MCF 10A (cell line): ENCODE measurements at regions of chr21 and their contacts with region 1.

Region 1: DNA sequence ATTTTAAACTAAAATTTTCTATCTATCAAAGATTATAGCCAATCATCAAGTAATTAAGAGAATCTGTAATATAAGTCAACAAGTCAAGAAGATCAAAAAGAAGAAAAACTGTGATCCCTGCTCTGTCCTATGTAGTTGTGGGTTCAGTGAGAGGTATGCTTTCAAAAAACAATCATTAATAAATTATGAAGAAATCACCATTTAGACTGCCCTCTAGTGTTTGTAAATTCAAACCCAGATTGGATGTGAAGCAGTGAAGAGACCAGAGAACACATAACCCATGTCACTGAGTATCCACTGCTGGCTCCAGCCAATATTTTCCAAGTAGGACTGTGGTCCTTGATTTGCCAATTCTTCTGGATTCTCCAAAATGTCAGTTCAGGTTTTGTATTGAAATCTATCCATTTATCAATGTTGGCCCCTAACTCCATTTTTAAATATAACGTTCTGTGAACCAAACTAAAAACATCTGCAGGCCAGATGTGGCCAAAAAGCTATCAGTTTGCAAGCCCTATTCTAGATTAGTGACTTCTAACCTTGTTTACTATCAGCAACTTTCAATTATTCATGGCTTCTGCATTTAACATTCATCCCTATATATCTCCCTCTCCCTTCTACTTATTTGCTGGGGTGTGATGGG is 467.5 kb upstream of the CXADR start:
- DNase-seq: peak; percentile 45
- H3K4me3 Mint-ChIP-seq: no peak overlapping the region
- H3K27ac Mint-ChIP-seq: no peak overlapping the region
- H3K4me1 Mint-ChIP-seq: no peaks in the 10 kb centered on the region
- H3K27me3 Mint-ChIP-seq: no peaks in the 10 kb centered on the region
- CTCF ChIP-seq: peak; percentile 52

Region 2: DNA sequence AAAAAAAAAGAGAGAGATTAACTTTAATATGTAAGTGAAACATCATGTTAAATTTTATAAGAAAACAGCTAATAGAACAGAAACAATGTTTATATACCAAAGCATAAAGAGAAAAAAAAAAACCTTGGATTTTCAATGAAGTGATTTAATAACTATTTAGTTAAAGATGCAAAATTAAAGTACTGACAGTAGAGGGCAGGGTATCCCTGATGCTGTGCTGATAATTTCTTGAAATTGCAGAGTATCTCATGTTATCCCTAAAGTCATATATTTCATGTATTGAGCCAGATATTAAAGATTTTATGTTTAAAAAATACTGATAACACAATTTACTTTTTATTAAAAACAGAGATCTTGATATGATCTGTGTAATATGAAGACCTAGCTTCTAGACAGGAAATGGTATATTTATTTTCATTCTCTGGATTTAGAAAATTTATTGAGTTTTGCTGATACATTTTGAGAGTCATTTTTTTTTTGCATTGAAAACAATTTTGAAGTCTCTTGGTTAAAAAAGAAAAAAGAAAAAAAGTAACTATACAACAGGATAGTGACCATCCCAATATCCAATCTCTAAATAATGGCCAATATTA is 1042.4 kb before region 1 on chr21:
- CTCF ChIA-PET with region 1: no interaction called
- POLR2A ChIA-PET with region 1: no interaction called
- intact Hi-C with region 1: loop called (anchors 1 kb)
- DNase-seq: peak; percentile 18
- H3K4me3 Mint-ChIP-seq: no peak overlapping the region
- H3K27ac Mint-ChIP-seq: no peak overlapping the region
- H3K4me1 Mint-ChIP-seq: no peaks in the 10 kb centered on the region
- H3K27me3 Mint-ChIP-seq: no peaks in the 10 kb centered on the region
- CTCF ChIP-seq: peak; percentile 31

Region 3: GRCh38 chr21:16071092-16071491 is 974.2 kb before region 1 on chr21:
- CTCF ChIA-PET with region 1: no interaction called
- POLR2A ChIA-PET with region 1: no interaction called
- intact Hi-C with region 1: loop called (anchors 10 kb)
- DNase-seq: no peak
- H3K4me3 Mint-ChIP-seq: no peak overlapping the region
- H3K27ac Mint-ChIP-seq: no peak overlapping the region
- H3K4me1 Mint-ChIP-seq: no peaks in the 10 kb centered on the region
- H3K27me3 Mint-ChIP-seq: peaks cover 28% of the 10 kb centered on the region
- CTCF ChIP-seq: no peak

Region 4: DNA sequence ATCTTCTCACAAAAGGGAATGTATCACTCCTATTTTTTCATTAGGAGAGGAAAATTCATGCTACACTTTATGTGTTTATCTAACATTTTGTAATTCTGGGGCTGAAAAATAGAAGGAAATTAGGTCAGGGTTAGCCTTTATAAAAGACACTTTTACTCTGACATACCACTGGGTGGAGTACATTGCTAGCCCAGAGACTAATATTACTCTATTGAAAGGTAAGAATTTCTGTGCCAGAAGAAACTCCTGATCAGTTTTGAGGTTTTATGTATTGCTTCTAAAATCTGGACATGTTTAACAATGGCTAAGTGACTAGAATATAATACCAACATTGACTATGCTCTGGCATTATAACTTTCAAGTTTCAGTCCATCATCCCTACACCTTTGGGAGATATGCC is 590.9 kb before region 1 on chr21:
- CTCF ChIA-PET with region 1: no interaction called
- POLR2A ChIA-PET with region 1: no interaction called
- intact Hi-C with region 1: loop called (anchors 1 kb)
- DNase-seq: peak; percentile 9
- H3K4me3 Mint-ChIP-seq: no peak overlapping the region
- H3K27ac Mint-ChIP-seq: no peak overlapping the region
- H3K4me1 Mint-ChIP-seq: no peaks in the 10 kb centered on the region
- H3K27me3 Mint-ChIP-seq: no peaks in the 10 kb centered on the region
- CTCF ChIP-seq: peak; percentile 26

Region 5: DNA sequence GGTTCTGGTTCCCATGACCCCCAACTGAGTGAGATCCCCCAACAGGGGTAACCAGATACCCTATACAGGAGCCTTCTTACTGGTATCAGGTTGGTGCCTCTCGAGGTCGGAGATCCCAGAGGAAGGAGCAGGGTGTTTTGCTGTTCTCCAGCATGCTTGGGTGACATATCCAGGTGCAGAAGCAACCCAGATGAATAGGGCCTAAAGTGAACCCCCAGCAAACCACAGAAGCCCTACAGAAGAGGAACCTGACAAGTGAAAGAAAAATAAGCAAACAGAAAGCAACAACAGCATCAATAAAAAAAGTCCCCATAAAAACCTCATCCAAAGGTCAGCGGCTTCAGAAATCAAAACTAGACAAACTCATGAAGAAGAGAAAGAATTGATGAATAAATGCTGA is 165.9 kb before region 1 on chr21:
- CTCF ChIA-PET with region 1: no interaction called
- POLR2A ChIA-PET with region 1: no interaction called
- intact Hi-C with region 1: no loop called
- DNase-seq: no peak
- H3K4me3 Mint-ChIP-seq: no peak overlapping the region
- H3K27ac Mint-ChIP-seq: no peak overlapping the region
- H3K4me1 Mint-ChIP-seq: no peaks in the 10 kb centered on the region
- H3K27me3 Mint-ChIP-seq: no peaks in the 10 kb centered on the region
- CTCF ChIP-seq: no peak

Region 6: GRCh38 chr21:16942703-16943102 is 102.6 kb before region 1 on chr21:
- CTCF ChIA-PET with region 1: interaction called, 7 read pairs
- POLR2A ChIA-PET with region 1: interaction called, 3 read pairs
- intact Hi-C with region 1: loop called (anchors 2 kb)
- DNase-seq: peak; percentile 54
- H3K4me3 Mint-ChIP-seq: no peak overlapping the region
- H3K27ac Mint-ChIP-seq: no peak overlapping the region
- H3K4me1 Mint-ChIP-seq: no peaks in the 10 kb centered on the region
- H3K27me3 Mint-ChIP-seq: no peaks in the 10 kb centered on the region
- CTCF ChIP-seq: peak; percentile 56

Region 7: DNA sequence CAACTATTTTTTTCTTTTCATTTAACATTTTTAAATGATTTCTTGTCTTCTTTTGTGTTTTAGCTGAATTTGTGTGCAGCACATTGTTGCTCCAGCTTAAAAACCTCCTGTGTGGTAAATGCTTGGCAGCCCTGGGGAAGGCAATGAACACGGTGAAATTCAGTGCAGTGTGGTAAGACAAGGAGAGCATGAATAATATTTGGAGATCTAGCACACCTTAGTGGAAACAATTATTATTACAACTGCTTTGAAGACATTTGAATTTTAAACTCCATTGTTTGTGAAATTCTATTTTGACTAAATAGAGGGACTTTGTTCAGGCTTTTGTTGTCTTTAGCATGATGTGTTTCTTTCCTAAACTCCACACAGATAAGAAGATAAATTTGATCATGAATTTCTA is 224.9 kb after region 1 on chr21:
- CTCF ChIA-PET with region 1: interaction called, 5 read pairs
- POLR2A ChIA-PET with region 1: no interaction called
- intact Hi-C with region 1: loop called (anchors 2 kb)
- DNase-seq: peak; percentile 52
- H3K4me3 Mint-ChIP-seq: no peak overlapping the region
- H3K27ac Mint-ChIP-seq: no peak overlapping the region
- H3K4me1 Mint-ChIP-seq: no peaks in the 10 kb centered on the region
- H3K27me3 Mint-ChIP-seq: no peaks in the 10 kb centered on the region
- CTCF ChIP-seq: peak; percentile 70

Region 8: DNA sequence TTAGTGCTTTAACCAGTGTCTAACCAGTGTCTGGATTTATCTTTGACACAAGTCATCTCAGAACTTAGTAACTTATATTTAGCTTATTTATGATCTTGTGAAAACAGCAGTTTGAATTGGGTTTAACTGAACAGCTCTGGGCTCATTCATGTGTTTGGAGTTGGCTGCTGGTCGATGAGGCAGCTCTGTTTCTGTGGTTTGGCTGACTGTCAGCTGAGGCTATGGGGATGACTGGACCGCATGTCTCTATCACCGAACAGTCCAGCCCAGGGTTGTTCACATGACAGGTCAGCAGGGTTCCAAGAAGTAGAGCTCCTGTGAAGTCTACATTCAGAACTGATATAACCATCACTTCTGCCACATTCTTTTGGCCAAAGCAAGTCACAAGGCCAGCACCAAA is 802.9 kb after region 1 on chr21:
- CTCF ChIA-PET with region 1: no interaction called
- POLR2A ChIA-PET with region 1: no interaction called
- intact Hi-C with region 1: no loop called
- DNase-seq: peak; percentile 87
- H3K4me3 Mint-ChIP-seq: peak overlapping the region; percentile 17
- H3K27ac Mint-ChIP-seq: peak overlapping the region; percentile 80
- H3K4me1 Mint-ChIP-seq: peaks cover 7% of the 10 kb centered on the region
- H3K27me3 Mint-ChIP-seq: no peaks in the 10 kb centered on the region
- CTCF ChIP-seq: no peak